Ovary (tissue), 10 donors: ENCODE measurements at regions of chr14 and their contacts with region 1.

Region 1: DNA sequence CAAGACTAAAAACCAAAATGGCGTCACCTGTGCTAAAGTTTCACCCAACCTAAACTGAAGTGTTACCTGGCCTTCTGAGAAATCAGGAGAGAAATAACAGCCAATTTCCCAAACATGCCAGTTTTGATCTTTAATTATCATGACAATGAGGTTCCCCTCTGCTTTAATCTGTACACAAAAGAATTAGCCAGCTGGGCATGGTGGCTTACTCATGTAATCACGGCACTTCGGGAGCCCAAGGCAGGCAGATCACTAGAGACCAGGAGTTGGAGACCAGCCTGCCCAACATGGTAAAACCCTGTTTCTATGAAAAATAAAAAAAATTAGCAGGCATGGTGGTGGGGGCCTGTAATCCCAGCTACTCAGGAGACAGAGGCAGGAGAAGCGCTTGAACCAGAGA is 4.9 kb downstream of the HEATR4 start:
- DNase-seq: no peak
- H3K4me3 ChIP-seq: no peak overlapping the region
- H3K27ac ChIP-seq: no peak overlapping the region
- H3K4me1 ChIP-seq: no peaks in the 10 kb centered on the region
- H3K27me3 ChIP-seq: no peaks in the 10 kb centered on the region
- CTCF ChIP-seq: no peak
- EP300 ChIP-seq: no peak
- POLR2A ChIP-seq: no peak

Region 2: GRCh38 chr14:73503648-73504047 is 50.2 kb before region 1 on chr14:
- intact Hi-C with region 1: no loop called
- DNase-seq: no peak
- H3K4me3 ChIP-seq: no peak overlapping the region
- H3K27ac ChIP-seq: no peak overlapping the region
- H3K4me1 ChIP-seq: no peaks in the 10 kb centered on the region
- H3K27me3 ChIP-seq: no peaks in the 10 kb centered on the region
- CTCF ChIP-seq: no peak
- EP300 ChIP-seq: no peak
- POLR2A ChIP-seq: no peak

Region 3: DNA sequence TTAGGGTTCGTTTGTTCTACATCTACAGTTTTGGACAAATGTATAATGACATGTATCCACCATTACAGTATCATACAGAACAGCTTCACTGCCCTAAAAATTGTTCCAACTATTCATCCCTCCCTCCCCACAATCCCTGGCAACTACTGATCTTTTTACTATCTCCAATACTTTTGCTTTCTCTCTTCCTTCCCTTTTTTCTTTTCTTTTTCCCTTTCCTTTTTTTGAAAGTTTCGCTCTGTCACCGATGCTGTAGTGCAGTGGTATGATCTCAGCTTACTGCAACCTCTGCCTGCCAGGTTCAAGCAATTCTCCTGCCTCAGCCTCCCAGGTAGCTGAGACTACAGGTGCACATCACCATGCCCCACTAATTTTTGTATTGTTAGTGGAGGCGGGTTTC is 35.3 kb after region 1 on chr14:
- intact Hi-C with region 1: loop called in 1 of 4 experiments (anchors 5 kb)
- DNase-seq: no peak
- H3K4me3 ChIP-seq: no peak overlapping the region
- H3K27ac ChIP-seq: no peak overlapping the region
- H3K4me1 ChIP-seq: peaks cover 4% of the 10 kb centered on the region
- H3K27me3 ChIP-seq: no peaks in the 10 kb centered on the region
- CTCF ChIP-seq: no peak
- EP300 ChIP-seq: no peak
- POLR2A ChIP-seq: no peak